Activated naive CD4-positive, alpha-beta T cell treated with anti-CD3 and anti-CD28 coated beads for 36 hours (primary cell): ENCODE measurements at regions of chr11 and their contacts with region 1.

Region 1: DNA sequence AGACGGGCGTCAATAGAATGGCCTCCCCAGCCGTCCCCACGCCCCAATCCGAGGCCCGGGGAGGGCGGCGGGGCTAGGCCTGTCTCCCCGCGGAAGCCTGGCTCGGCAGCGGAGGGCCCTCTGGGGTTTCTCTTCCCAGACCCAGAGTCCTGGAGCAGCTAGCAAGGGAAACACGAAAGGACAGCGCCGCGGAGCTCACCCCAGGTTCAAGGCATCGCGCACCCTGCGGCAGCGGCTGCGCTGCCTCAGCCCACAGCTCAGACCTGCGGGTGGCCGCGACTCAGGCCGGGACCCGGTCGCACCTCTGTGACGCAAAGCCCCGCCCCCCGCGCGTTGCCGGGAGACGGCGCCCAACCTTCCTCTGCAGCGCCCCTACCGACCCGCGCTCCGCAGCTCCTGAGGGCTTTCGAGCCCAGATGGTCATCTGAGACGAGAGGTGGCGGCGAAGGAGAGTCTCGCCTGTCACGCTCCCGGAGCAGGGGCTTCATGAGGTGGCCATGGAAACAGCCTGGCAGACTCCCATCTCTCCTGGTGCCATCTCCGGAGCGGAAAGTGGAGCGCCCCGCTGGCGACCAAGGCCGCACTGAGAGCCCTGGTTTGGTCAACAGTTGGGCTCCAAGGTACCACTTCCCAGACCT is at the start of gene RNF141:
- DNase-seq: peak; percentile 96
- H3K4me3 Mint-ChIP-seq: peak within 1 kb of the TSS; percentile 86
- H3K27ac Mint-ChIP-seq: no peak within 1 kb of the TSS
- H3K4me1 Mint-ChIP-seq: peaks cover 21% of the 10 kb centered on the region
- H3K27me3 Mint-ChIP-seq: no peaks in the 10 kb centered on the region
- total RNA-seq, gene RNF141: 20.9 to 21.8 TPM

Region 2: GRCh38 chr11:9396752-9397151 is 1144.3 kb before region 1 on chr11:
- CTCF ChIA-PET with region 1: no interaction called
- intact Hi-C with region 1: no loop called
- DNase-seq: no peak
- H3K4me3 Mint-ChIP-seq: no peak overlapping the region
- H3K27ac Mint-ChIP-seq: peak overlapping the region; percentile 57
- H3K4me1 Mint-ChIP-seq: peaks cover 64% of the 10 kb centered on the region
- H3K27me3 Mint-ChIP-seq: no peaks in the 10 kb centered on the region

Region 3: DNA sequence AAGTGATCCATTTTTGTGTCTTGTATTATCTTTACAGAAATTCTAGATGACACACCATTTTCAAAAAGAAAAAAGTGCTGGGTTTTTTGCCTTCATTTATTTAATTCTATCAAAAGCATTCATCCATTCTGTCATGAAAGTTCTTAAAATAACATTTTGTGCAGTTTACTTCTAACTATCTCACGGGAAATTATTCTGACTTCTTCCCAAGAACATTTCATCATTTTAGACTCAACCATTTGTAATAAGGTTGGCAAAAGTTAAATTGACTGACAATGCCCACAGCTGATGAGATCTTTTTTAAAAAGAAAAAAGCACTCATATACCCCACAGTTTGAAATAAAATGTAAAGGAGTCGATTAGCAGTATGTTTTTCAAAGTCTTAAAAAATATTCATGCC is 315.5 kb before region 1 on chr11:
- CTCF ChIA-PET with region 1: no interaction called
- intact Hi-C with region 1: no loop called
- DNase-seq: no peak
- H3K4me3 Mint-ChIP-seq: no peak overlapping the region
- H3K27ac Mint-ChIP-seq: no peak overlapping the region
- H3K4me1 Mint-ChIP-seq: no peaks in the 10 kb centered on the region
- H3K27me3 Mint-ChIP-seq: no peaks in the 10 kb centered on the region

Region 4: GRCh38 chr11:10413268-10413667 is 127.8 kb before region 1 on chr11:
- CTCF ChIA-PET with region 1: interaction called, 10 read pairs
- intact Hi-C with region 1: loop called (anchors 1 kb)
- DNase-seq: peak; percentile 71
- H3K4me3 Mint-ChIP-seq: no peak overlapping the region
- H3K27ac Mint-ChIP-seq: no peak overlapping the region
- H3K4me1 Mint-ChIP-seq: peaks cover 26% of the 10 kb centered on the region
- H3K27me3 Mint-ChIP-seq: no peaks in the 10 kb centered on the region

Region 5: DNA sequence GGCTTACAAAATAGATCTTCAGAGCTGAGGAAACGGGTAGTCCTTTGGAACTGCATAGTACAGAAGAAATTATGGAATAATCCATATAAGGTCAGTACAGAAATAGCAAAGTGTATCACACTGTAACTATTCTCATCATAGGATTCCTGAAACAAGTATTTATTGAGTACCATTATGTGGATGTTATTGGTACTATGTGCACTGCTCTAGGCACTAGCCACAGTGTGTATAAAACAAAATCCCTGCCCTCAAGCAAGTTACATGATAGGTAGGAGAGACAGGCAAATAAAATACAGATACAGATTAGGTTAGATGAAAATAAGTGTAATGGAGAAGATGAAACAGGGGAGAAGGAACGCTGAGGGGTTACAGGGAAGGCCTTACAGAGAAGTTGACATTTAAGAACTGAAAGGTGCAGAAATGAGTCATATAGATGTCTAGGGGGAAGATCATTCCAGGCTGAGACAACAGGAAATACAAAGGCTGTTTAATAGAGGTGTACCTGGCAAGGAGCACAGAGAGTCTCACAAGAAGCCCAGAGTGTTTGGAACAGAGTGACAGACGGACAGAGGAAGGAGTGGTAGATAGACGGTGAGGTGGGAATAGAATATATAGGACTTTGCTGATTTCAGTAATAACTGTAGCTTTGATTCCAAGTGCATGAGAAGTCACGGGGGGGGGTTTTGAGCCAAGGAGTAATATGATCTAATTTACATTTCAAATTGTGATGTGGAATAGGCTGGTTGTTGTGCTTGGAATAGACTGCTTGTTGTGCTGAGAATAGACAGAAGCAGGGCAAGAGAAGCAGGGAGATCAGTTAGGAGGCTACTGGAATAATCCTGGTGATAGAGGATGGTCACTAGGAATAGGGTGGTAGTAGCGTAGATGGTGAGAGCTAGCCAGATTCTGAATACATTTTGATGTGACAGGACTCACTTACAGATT is 13.8 kb before region 1 on chr11:
- CTCF ChIA-PET with region 1: interaction called, 17 read pairs
- intact Hi-C with region 1: loop called (anchors 1 kb)
- DNase-seq: no peak
- H3K4me3 Mint-ChIP-seq: no peak overlapping the region
- H3K27ac Mint-ChIP-seq: peak overlapping the region; percentile 70
- H3K4me1 Mint-ChIP-seq: peaks cover 19% of the 10 kb centered on the region
- H3K27me3 Mint-ChIP-seq: no peaks in the 10 kb centered on the region

Region 6: GRCh38 chr11:10573556-10573955 is 32.5 kb after region 1 on chr11:
- CTCF ChIA-PET with region 1: no interaction called
- intact Hi-C with region 1: no loop called
- DNase-seq: no peak
- H3K4me3 Mint-ChIP-seq: no peak overlapping the region
- H3K27ac Mint-ChIP-seq: no peak overlapping the region
- H3K4me1 Mint-ChIP-seq: no peaks in the 10 kb centered on the region
- H3K27me3 Mint-ChIP-seq: peaks cover 5% of the 10 kb centered on the region

Region 7: GRCh38 chr11:10735481-10736475 is 194.7 kb after region 1 on chr11:
- CTCF ChIA-PET with region 1: interaction called, 14 read pairs
- intact Hi-C with region 1: loop called (anchors 5 kb)
- DNase-seq: peak; percentile 90
- H3K4me3 Mint-ChIP-seq: peak overlapping the region; percentile 54
- H3K27ac Mint-ChIP-seq: no peak overlapping the region
- H3K4me1 Mint-ChIP-seq: peaks cover 5% of the 10 kb centered on the region
- H3K27me3 Mint-ChIP-seq: peaks cover 6% of the 10 kb centered on the region

Region 8: GRCh38 chr11:10808553-10809372 is 267.7 kb after region 1 on chr11 and contains the start of gene EIF4G2:
- CTCF ChIA-PET with region 1: no interaction called
- intact Hi-C with region 1: loop called (anchors 5 kb)
- DNase-seq: peak; percentile 98
- H3K4me3 Mint-ChIP-seq: peak within 1 kb of the TSS; percentile 95
- H3K27ac Mint-ChIP-seq: peak within 1 kb of the TSS; percentile 97
- H3K4me1 Mint-ChIP-seq: peaks cover 43% of the 10 kb centered on the region
- H3K27me3 Mint-ChIP-seq: no peaks in the 10 kb centered on the region
- total RNA-seq, gene EIF4G2: 640 to 734 TPM